ENCODE measurements at regions of chr9 and their contacts with region 1.

Region 1: DNA sequence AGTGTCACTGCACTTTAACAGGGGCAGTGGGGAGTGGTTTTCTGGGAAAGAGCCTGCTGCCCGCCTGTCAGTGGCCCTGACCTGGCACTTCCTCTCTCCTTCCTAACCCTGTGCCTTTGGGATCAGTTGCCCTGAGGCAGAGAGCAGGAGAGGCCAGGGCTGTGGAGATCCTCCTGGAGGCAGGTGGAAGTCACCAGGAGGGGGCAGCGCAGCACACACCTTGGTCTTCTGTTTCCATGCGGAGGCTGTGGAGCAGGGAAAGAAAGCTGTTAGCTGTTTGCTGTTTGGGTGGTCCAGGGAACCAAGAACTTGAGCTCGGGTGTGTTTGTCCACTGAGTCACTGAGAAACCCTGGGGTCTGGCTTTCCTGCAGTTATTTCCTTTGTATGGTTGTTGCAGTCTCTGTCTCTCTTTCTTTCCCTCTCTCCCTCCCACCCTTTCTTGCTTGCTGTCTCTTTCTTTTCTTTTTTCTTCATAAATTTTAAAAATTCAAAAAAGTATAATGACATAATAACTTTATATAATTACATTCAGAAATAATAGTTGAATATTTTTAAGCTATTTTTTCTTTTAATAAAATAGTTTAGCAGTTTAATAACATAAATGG is 28.1 kb downstream of the NTRK2 start:
- ATAC-seq: peak; percentile 81 to 90 (median 84)
- H3K4me3 ChIP-seq: no peak overlapping the region
- H3K27ac ChIP-seq: no peak overlapping the region
- H3K4me1 ChIP-seq: peaks cover 18 to 21% of the 10 kb centered on the region in 2 donors

Region 2: GRCh38 chr9:84932915-84933527 is 235.4 kb after region 1 on chr9:
- in situ Hi-C with region 1: loop called in 1 of 9 experiments (anchors 25 kb)
- ATAC-seq: peak in 7 of 8 experiments; percentile 25 to 76 (median 47)
- H3K4me3 ChIP-seq: no peak overlapping the region
- H3K27ac ChIP-seq: no peak overlapping the region
- H3K4me1 ChIP-seq: peaks cover 22 to 28% of the 10 kb centered on the region in 2 donors

Region 3: DNA sequence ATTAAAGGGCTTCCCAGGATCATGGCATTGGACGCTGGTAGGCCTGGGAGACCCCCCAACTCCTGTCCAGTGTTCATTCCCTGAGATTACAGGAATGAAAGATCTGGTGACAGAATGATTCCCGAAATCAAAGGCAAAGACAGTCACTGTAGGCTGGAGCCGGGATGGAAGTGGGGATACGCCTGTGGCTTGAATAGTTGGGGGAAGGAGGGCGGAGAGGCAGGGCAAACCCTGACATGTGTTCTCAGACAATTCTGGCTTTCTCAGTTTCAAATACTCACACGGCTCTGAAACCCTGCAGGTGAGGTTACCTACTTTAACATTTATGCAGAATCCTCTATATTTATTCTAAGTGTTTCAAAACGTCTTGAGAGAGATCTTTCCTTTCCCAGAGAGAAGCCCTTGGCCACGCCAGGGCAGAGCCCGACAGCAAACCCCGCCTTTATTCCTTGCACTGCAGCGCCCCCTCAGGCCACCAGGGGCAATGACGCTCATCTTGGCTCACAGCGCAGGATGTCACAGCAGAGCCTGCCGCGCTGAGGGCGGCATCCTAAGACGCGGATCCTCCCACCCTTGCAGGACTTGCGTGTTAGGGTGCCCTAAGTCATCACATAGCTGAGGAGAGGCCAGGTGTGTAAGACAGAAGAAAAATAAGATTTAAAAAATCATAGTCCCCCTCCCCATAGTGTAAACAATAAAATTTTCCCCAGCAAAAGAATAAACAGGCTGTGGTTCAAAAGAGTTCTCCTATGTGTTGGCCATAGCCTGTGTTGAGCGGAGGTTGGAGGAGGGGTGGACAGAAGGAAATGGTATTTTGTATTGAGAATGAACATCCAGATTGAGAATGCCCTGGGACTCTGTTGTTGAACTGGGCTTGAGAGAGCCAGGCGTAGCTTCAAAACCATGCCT is 256.4 kb after region 1 on chr9:
- in situ Hi-C with region 1: loop called in 2 of 9 experiments (anchors 25 kb)
- ATAC-seq: peak; percentile 99 to 100 (median 100)
- H3K4me3 ChIP-seq: no peak overlapping the region
- H3K27ac ChIP-seq: no peak overlapping the region
- H3K4me1 ChIP-seq: peaks cover 4 to 7% of the 10 kb centered on the region in 2 donors

Region 4: GRCh38 chr9:85079349-85079748 is 381.7 kb after region 1 on chr9:
- in situ Hi-C with region 1: no loop called
- ATAC-seq: peak in 3 of 8 experiments; percentile 46 to 60 (median 54)
- H3K4me3 ChIP-seq: no peak overlapping the region
- H3K27ac ChIP-seq: no peak overlapping the region
- H3K4me1 ChIP-seq: peaks cover 5 to 7% of the 10 kb centered on the region in 2 donors

Measured in motor neuron (in vitro differentiated cells).